ENCODE measurements at regions of chr1 and their contacts with region 1.

Region 1: GRCh38 chr1:155091071-155091709 is 12.6 kb downstream of the EFNA3 start:
- DNase-seq: no peak
- H3K4me3 ChIP-seq: no peak overlapping the region
- CTCF ChIP-seq: peak; percentile 95

Region 2: GRCh38 chr1:154955718-154956543 is 135.3 kb before region 1 on chr1 and contains the start of gene PBXIP1:
- CTCF ChIA-PET with region 1: no interaction called
- POLR2A ChIA-PET with region 1: no interaction called
- DNase-seq: peak; percentile 50
- H3K4me3 ChIP-seq: peak within 1 kb of the TSS; percentile 66
- CTCF ChIP-seq: peak; percentile 31

Region 3: GRCh38 chr1:155001675-155002463 is 89.3 kb before region 1 on chr1:
- CTCF ChIA-PET with region 1: no interaction called
- POLR2A ChIA-PET with region 1: no interaction called
- DNase-seq: peak; percentile 85
- H3K4me3 ChIP-seq: peak overlapping the region; percentile 93
- CTCF ChIP-seq: peak; percentile 60

Region 4: GRCh38 chr1:155063550-155064110 is 27.6 kb before region 1 on chr1 and contains the start of gene EFNA4:
- CTCF ChIA-PET with region 1: interaction called, 212 read pairs
- POLR2A ChIA-PET with region 1: no interaction called
- DNase-seq: no peak
- H3K4me3 ChIP-seq: peak within 1 kb of the TSS; percentile 96
- CTCF ChIP-seq: no peak

Region 5: GRCh38 chr1:155078469-155079209 is 12.6 kb before region 1 on chr1 and contains the start of gene EFNA3:
- CTCF ChIA-PET with region 1: interaction called, 60 read pairs
- POLR2A ChIA-PET with region 1: no interaction called
- DNase-seq: no peak
- H3K4me3 ChIP-seq: peak within 1 kb of the TSS; percentile 51
- CTCF ChIP-seq: no peak

Region 6: GRCh38 chr1:155113450-155113990 is 22.3 kb after region 1 on chr1:
- CTCF ChIA-PET with region 1: interaction called, 26 read pairs
- POLR2A ChIA-PET with region 1: no interaction called
- DNase-seq: no peak
- H3K4me3 ChIP-seq: no peak overlapping the region
- CTCF ChIP-seq: no peak

Region 7: DNA sequence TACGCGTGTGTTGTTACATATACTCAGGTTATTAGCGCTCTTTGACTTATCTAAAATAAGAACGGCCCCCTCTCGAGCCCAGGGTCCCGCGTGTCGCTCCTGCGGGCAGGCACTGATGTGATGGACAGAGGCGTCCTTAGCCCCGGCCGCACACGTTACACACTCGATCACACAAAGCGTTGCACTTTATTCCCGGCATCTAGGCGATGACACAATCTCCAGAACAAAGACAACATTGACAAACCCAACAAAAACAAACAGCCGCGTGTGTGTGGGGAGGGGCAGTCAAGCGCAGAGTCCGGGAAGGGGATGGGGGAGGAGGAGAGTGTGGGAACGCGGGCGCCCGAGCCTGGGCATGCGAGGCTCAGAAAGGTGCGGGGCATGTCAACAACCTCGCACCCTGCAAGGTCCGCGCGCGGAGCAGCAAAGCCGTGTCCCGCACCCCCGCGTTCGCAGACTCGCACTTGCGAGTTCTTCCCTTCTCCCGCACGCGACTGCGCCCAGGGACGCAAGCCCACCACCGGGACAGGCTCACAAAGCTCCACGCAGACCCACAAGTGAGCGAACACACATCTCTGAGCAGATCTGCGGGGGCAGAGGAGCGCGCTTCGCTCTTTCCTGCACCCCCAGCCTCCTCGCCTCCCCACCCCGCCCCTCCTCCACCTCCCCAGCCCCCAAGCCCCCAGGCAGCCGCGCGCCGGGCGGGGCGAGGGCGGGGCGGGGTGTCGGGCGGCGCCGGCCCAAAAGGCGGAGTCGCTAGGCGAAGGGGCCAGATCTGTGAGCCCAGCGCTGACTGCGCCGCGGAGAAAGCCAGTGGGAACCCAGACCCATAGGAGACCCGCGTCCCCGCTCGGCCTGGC is 36.1 kb after region 1 on chr1 and contains the start of gene EFNA1:
- CTCF ChIA-PET with region 1: interaction called, 52 read pairs
- POLR2A ChIA-PET with region 1: no interaction called
- DNase-seq: no peak
- H3K4me3 ChIP-seq: peak within 1 kb of the TSS; percentile 53
- CTCF ChIP-seq: no peak

Region 8: GRCh38 chr1:155145491-155145890 is 54.3 kb after region 1 on chr1:
- CTCF ChIA-PET with region 1: interaction called, 11 read pairs
- POLR2A ChIA-PET with region 1: no interaction called
- DNase-seq: no peak
- H3K4me3 ChIP-seq: no peak overlapping the region
- CTCF ChIP-seq: no peak